Psoas muscle (tissue), 8 donors: ENCODE measurements at regions of chrX and their contacts with region 1.

Region 1: DNA sequence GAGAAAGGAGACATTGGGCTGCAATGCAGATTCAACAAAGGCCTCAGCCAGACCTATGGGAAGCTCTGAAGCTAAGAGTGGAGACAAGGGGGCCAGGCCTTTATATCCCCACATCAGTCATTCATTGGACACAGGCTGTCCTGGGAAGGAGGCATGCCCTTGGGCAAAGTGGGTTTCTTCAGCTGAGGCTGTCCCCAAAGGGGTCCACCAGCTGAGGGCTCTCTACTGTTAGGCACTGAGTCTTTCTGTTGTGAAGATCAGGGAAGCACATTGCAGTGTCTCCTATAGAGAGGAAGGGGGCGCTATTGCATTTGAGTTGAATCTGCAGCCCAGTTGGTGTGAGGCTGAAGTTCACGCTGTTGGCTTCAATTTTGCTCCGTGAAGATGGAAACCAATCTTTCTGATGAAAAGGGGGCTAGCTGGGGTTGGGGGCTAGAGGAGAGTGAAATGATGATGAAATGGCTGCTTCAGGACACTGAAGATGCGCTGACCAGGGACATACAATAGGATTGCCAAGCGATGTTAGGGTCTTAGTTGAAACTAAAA is 48.0 kb downstream of the SLC25A5 start:
- DNase-seq: no peak
- ATAC-seq: peak; percentile 59 to 89 (median 78)
- H3K4me3 ChIP-seq: no peak overlapping the region
- H3K27ac ChIP-seq: no peak overlapping the region
- H3K4me1 ChIP-seq: no peaks in the 10 kb centered on the region
- H3K27me3 ChIP-seq: no peaks in the 10 kb centered on the region
- CTCF ChIP-seq: peak; percentile 65

Region 2: GRCh38 chrX:119410027-119410823 is 106.0 kb before region 1 on chrX:
- intact Hi-C with region 1: loop called in 1 of 2 experiments (anchors 10 kb)
- DNase-seq: peak; percentile 67 to 82
- ATAC-seq: no peak
- H3K4me3 ChIP-seq: no peak overlapping the region
- H3K27ac ChIP-seq: no peak overlapping the region
- H3K4me1 ChIP-seq: no peaks in the 10 kb centered on the region
- H3K27me3 ChIP-seq: no peaks in the 10 kb centered on the region
- CTCF ChIP-seq: no peak

Region 3: DNA sequence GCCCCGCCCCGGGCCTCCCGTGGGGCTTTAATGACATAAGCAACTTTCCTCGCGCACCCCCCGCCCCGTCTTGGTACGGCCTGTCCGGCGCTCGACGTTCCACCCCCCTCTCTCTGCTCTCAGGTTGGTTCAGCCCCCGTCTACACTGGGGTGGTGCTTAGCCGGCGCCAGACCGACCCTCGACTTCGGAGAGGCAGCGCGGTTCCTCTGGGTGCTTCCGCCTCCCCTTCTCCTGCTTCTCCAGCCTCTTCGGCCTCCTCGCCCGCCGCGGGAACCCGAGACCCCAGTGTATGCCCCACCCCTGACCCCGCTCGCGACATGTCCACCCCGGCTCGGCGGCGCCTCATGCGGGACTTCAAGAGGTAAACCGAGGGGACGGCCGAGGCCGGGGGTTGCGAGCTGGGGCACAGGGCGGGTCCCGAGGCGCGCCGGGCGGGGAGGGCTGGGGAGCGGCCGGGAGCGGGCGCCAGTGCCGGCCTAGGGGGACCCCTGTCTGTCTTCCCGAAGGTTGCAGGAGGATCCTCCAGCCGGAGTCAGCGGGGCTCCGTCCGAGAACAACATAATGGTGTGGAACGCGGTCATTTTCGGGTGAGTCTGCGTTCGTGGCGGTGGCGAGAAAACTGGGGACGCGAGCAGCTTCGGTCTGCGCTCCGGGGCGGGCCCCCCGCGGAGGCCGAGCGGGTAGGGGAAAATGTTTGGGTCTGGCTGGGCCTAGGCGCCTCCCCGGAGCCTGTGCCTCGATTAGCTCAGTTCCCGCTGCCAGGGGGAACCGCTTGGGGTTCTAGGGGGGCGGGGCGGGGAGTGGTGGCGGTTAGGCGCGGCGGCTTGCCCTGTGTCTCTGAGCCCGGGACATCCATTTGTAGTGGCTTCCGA is 58.4 kb after region 1 on chrX and contains the start of gene UBE2A:
- intact Hi-C with region 1: loop called in 1 of 2 experiments (anchors 5 kb)
- DNase-seq: peak; percentile 91 to 95
- ATAC-seq: peak; percentile 94 to 98 (median 96)
- H3K4me3 ChIP-seq: peak within 1 kb of the TSS; percentile 81
- H3K27ac ChIP-seq: peak within 1 kb of the TSS; percentile 91
- H3K4me1 ChIP-seq: peaks cover 7% of the 10 kb centered on the region
- H3K27me3 ChIP-seq: peaks cover 0 to 4% (median 0%) of the 10 kb centered on the region in 3 donors
- CTCF ChIP-seq: peak; percentile 38
- total RNA-seq, gene UBE2A: 52.0 to 62.1 (median 55.2) TPM

Region 4: DNA sequence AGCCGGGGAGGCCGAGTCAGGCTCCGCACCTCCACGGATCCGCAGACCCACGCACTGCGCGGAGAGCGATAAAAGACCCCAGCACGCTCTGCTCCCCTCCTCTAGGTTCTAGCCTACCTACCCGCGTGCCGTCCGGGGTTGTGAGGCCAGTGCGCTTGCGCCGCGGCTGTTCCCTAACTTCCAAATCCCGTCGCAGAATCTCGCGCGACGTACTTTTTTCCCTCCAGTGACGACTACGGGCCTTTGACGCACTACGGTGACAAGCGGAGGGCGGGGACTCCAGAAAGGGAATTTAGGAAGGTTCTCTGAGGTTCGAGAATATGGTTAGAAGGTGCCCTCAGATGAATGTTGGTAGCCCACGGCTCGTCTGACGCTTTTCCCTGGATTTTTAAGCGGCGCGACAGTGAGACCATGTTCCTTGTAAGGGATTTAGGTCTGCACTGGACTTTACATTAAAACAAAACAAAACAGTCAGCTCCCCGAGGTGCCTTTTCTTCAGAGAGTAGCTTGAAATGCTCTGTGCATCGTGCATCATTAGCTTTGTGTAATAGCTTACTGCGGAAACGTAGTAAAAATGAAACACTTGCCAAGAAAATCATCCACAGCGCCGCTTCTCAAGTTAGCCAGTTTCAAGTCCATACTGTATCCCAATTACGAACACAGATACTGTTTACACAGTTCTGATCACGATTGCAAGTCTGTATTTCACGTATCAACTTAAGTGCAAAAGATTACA is 90.2 kb after region 1 on chrX and contains the start of gene NKRF:
- intact Hi-C with region 1: loop called in 1 of 2 experiments (anchors 10 kb)
- DNase-seq: peak; percentile 92 to 95
- ATAC-seq: peak; percentile 92 to 98 (median 96)
- H3K4me3 ChIP-seq: peak within 1 kb of the TSS; percentile 71
- H3K27ac ChIP-seq: peak within 1 kb of the TSS; percentile 79
- H3K4me1 ChIP-seq: no peaks in the 10 kb centered on the region
- H3K27me3 ChIP-seq: no peaks in the 10 kb centered on the region
- CTCF ChIP-seq: no peak
- total RNA-seq, gene NKRF: 6.0 to 8.1 (median 7.6) TPM

Region 5: GRCh38 chrX:119729408-119730201 is 213.4 kb after region 1 on chrX:
- intact Hi-C with region 1: loop called in 1 of 2 experiments (anchors 5 kb)
- DNase-seq: peak in 1 of 2 donors; percentile 40
- ATAC-seq: peak; percentile 37 to 62 (median 60)
- H3K4me3 ChIP-seq: no peak overlapping the region
- H3K27ac ChIP-seq: no peak overlapping the region
- H3K4me1 ChIP-seq: no peaks in the 10 kb centered on the region
- H3K27me3 ChIP-seq: peaks cover 0 to 3% (median 0%) of the 10 kb centered on the region in 3 donors
- CTCF ChIP-seq: peak; percentile 46

Region 6: DNA sequence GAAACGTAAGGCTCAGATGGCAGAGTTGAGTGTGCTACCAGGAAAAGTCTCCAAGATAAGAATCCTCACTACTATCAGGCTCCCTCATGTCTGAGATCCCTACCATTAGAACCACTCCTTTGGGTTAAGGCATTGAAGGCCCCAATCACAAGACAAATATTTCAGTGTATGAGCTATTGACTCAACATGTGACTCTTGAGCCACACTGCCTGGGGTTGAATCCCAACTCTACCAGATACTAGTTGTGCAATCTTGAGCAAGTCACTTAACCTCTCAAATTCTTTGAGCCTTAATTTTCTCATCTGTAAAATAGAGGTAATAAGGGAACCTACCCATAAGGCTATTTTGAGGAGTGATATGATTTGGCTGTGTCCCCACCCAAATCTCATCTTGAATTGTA is 224.9 kb after region 1 on chrX:
- intact Hi-C with region 1: no loop called
- DNase-seq: no peak
- ATAC-seq: no peak
- H3K4me3 ChIP-seq: no peak overlapping the region
- H3K27ac ChIP-seq: no peak overlapping the region
- H3K4me1 ChIP-seq: no peaks in the 10 kb centered on the region
- H3K27me3 ChIP-seq: no peaks in the 10 kb centered on the region
- CTCF ChIP-seq: no peak

Region 7: DNA sequence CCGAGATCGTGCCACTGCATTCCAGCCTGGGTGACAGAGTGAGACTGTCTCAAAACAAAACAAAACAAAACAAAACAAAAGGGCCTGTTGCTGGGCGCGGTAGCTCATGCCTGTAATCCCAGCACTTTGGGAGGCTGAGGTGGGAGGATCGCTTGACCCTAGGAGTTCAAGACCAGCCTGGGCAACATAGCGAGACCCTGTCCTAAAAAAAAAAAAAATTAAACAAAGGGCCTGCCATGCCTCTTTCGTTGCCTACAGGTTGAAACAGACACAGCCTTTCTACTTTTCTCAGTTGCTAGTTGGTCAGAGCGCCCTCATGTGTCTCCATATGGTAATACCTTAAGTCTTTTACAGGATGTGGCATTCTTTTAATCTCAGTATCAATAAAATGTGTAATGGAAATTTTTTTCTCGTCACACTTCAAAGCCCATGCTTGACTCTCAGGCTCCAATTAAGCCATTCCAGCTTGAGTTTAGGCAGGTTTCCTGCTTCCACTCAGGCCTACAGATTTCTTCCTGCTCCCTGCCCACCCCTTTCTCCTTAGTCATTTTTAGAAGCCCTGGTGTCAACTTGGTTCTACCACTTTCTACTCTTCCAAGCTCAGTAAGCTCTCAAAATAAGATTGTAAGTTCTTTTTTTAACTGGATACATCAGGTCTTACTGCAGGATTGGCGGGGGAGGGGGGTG is 237.5 kb after region 1 on chrX:
- intact Hi-C with region 1: loop called in 1 of 2 experiments (anchors 10 kb)
- DNase-seq: no peak
- ATAC-seq: no peak
- H3K4me3 ChIP-seq: no peak overlapping the region
- H3K27ac ChIP-seq: no peak overlapping the region
- H3K4me1 ChIP-seq: no peaks in the 10 kb centered on the region
- H3K27me3 ChIP-seq: peaks cover 0 to 12% (median 2%) of the 10 kb centered on the region in 3 donors
- CTCF ChIP-seq: peak; percentile 17